Heart left ventricle (tissue), 16 donors: ENCODE measurements at regions of chr1 and their contacts with region 1.

Region 1: GRCh38 chr1:145891587-145892485 is 6.2 kb upstream of the ANKRD35 start:
- DNase-seq: peak; percentile 89 to 95 (median 93)
- ATAC-seq: peak; percentile 87 to 95 (median 94)
- H3K4me3 ChIP-seq: peak overlapping the region in 9 of 12 donors; percentile 1 to 35 (median 10)
- H3K27ac ChIP-seq: peak overlapping the region; percentile 77 to 91 (median 83)
- H3K4me1 ChIP-seq: peaks cover 3 to 29% (median 26%) of the 10 kb centered on the region in 12 donors
- H3K27me3 ChIP-seq: no peaks in the 10 kb centered on the region
- CTCF ChIP-seq: peak; percentile 85 to 98 (median 94)
- POLR2A ChIP-seq: no peak

Region 2: DNA sequence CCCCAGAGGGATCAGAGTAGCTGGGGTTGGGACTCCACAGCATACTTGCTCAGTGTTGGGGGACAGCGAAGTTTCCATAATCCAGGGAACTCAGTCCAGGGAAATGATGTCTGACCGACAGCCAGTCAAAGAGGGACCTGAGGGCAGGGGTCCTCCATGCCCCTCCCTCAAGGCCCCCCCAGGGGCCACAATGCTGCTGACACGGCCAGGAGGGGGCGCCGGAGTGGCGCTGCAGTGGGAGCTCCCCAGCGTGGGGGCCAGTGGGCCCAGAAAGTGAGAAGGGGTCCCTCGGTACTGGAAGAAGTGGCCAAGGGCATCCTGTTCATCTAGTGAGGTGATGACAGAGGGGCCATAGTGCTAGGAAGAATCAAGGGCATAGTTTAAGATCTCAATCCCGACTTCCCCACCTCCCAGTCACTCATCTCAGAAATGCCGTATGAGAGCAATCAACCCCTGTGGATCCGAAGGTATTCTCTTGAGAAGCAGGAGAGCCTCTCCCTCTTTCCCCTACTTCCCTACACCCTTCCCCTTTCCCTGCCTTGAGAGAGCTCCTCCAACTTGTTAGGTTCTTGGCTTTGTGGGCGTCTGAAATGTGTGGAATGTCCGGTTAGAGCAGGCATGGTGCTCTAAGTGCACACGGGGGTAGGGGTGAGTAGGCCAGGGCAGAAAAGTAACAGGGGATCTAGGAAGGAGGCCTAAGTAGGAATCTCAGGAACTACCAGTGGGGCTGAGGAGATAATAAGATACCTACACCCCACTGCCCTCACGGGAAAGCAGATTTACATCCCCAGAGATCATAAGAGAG is 42.3 kb before region 1 on chr1:
- intact Hi-C with region 1: no loop called
- DNase-seq: no peak
- ATAC-seq: no peak
- H3K4me3 ChIP-seq: no peak overlapping the region
- H3K27ac ChIP-seq: no peak overlapping the region
- H3K4me1 ChIP-seq: peaks cover 0 to 16% (median 11%) of the 10 kb centered on the region in 12 donors
- H3K27me3 ChIP-seq: no peaks in the 10 kb centered on the region
- CTCF ChIP-seq: peak in 6 of 12 donors; percentile 19 to 36 (median 24)
- POLR2A ChIP-seq: no peak

Region 3: GRCh38 chr1:145906954-145907753 is 15.3 kb after region 1 on chr1:
- intact Hi-C with region 1: loop called in 6 of 10 experiments (anchors 1 to 2 kb)
- DNase-seq: no peak
- ATAC-seq: peak; percentile 40 to 82 (median 54)
- H3K4me3 ChIP-seq: no peak overlapping the region
- H3K27ac ChIP-seq: peak overlapping the region in 11 of 12 donors; percentile 14 to 69 (median 41)
- H3K4me1 ChIP-seq: peaks cover 0 to 28% (median 19%) of the 10 kb centered on the region in 12 donors
- H3K27me3 ChIP-seq: no peaks in the 10 kb centered on the region
- CTCF ChIP-seq: no peak
- POLR2A ChIP-seq: no peak

Region 4: DNA sequence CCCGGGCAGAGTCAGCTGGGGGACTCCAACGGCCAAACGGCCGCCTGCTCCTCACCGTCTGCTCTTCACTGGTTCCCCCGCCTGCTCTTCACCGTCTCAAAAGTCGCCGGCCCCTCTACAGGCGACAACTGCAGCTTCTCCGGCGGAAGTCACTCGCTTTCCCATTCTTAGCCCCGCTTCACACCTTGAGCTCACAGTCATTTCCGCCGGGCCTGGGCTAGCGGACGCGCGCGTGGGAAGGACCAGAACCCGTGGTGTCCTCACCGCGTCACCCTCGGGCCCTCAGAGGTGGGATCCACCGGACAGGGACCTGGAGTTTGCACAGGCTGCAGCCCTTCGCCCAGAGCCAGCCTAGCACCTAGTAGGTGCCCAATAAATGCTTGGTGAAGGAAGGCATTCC is 157.6 kb after region 1 on chr1:
- intact Hi-C with region 1: no loop called
- DNase-seq: peak in 1 of 5 donors; percentile 58
- ATAC-seq: no peak
- H3K4me3 ChIP-seq: no peak overlapping the region
- H3K27ac ChIP-seq: no peak overlapping the region
- H3K4me1 ChIP-seq: peaks cover 0 to 10% (median 0%) of the 10 kb centered on the region in 12 donors
- H3K27me3 ChIP-seq: no peaks in the 10 kb centered on the region
- CTCF ChIP-seq: no peak
- POLR2A ChIP-seq: no peak